ENCODE measurements at regions of chr10 and their contacts with region 1.

Region 1: GRCh38 chr10:5629303-5630111 is 36.9 kb downstream of the ASB13 start:
- DNase-seq: peak; percentile 93
- ATAC-seq: peak; percentile 74
- H3K4me3 Mint-ChIP-seq: peak overlapping the region; percentile 44
- H3K27ac Mint-ChIP-seq: peak overlapping the region; percentile 82
- H3K4me1 Mint-ChIP-seq: peaks cover 22% of the 10 kb centered on the region
- H3K27me3 Mint-ChIP-seq: peaks cover 7% of the 10 kb centered on the region

Region 2: GRCh38 chr10:4819707-4820106 is 809.8 kb before region 1 on chr10:
- CTCF ChIA-PET with region 1: interaction called, 4 read pairs
- POLR2A ChIA-PET with region 1: no interaction called
- intact Hi-C with region 1: loop called in 1 of 2 experiments (anchors 5 kb)
- DNase-seq: no peak
- ATAC-seq: no peak
- H3K4me3 Mint-ChIP-seq: no peak overlapping the region
- H3K27ac Mint-ChIP-seq: no peak overlapping the region
- H3K4me1 Mint-ChIP-seq: no peaks in the 10 kb centered on the region
- H3K27me3 Mint-ChIP-seq: peaks cover 6% of the 10 kb centered on the region

Region 3: GRCh38 chr10:5071411-5072198 is 557.9 kb before region 1 on chr10:
- CTCF ChIA-PET with region 1: no interaction called
- POLR2A ChIA-PET with region 1: no interaction called
- intact Hi-C with region 1: no loop called
- DNase-seq: no peak
- ATAC-seq: no peak
- H3K4me3 Mint-ChIP-seq: no peak overlapping the region
- H3K27ac Mint-ChIP-seq: no peak overlapping the region
- H3K4me1 Mint-ChIP-seq: no peaks in the 10 kb centered on the region
- H3K27me3 Mint-ChIP-seq: peaks cover 2% of the 10 kb centered on the region

Region 4: GRCh38 chr10:5446390-5446926 is 183.0 kb before region 1 on chr10:
- CTCF ChIA-PET with region 1: interaction called, 178 read pairs
- POLR2A ChIA-PET with region 1: interaction called, 3 read pairs
- intact Hi-C with region 1: no loop called
- DNase-seq: peak; percentile 86
- ATAC-seq: peak; percentile 71
- H3K4me3 Mint-ChIP-seq: peak overlapping the region; percentile 70
- H3K27ac Mint-ChIP-seq: peak overlapping the region; percentile 45
- H3K4me1 Mint-ChIP-seq: peaks cover 53% of the 10 kb centered on the region
- H3K27me3 Mint-ChIP-seq: no peaks in the 10 kb centered on the region

Region 5: GRCh38 chr10:5563991-5564536 is 65.4 kb before region 1 on chr10:
- CTCF ChIA-PET with region 1: no interaction called
- POLR2A ChIA-PET with region 1: no interaction called
- intact Hi-C with region 1: loop called in 1 of 2 experiments (anchors 2 kb)
- DNase-seq: peak; percentile 80
- ATAC-seq: peak; percentile 86
- H3K4me3 Mint-ChIP-seq: peak overlapping the region; percentile 51
- H3K27ac Mint-ChIP-seq: peak overlapping the region; percentile 86
- H3K4me1 Mint-ChIP-seq: peaks cover 49% of the 10 kb centered on the region
- H3K27me3 Mint-ChIP-seq: no peaks in the 10 kb centered on the region

Region 6: GRCh38 chr10:5643346-5644067 is 14.0 kb after region 1 on chr10:
- CTCF ChIA-PET with region 1: interaction called, 18 read pairs
- POLR2A ChIA-PET with region 1: no interaction called
- intact Hi-C with region 1: no loop called
- DNase-seq: no peak
- ATAC-seq: no peak
- H3K4me3 Mint-ChIP-seq: no peak overlapping the region
- H3K27ac Mint-ChIP-seq: no peak overlapping the region
- H3K4me1 Mint-ChIP-seq: no peaks in the 10 kb centered on the region
- H3K27me3 Mint-ChIP-seq: no peaks in the 10 kb centered on the region

Region 7: GRCh38 chr10:5752301-5752871 is 122.9 kb after region 1 on chr10:
- CTCF ChIA-PET with region 1: no interaction called
- POLR2A ChIA-PET with region 1: no interaction called
- intact Hi-C with region 1: loop called in 1 of 2 experiments (anchors 5 kb)
- DNase-seq: no peak
- ATAC-seq: peak; percentile 31
- H3K4me3 Mint-ChIP-seq: no peak overlapping the region
- H3K27ac Mint-ChIP-seq: no peak overlapping the region
- H3K4me1 Mint-ChIP-seq: peaks cover 29% of the 10 kb centered on the region
- H3K27me3 Mint-ChIP-seq: no peaks in the 10 kb centered on the region

Region 8: GRCh38 chr10:5873515-5873995 is 244.0 kb after region 1 on chr10:
- CTCF ChIA-PET with region 1: interaction called, 4 read pairs
- POLR2A ChIA-PET with region 1: no interaction called
- intact Hi-C with region 1: loop called (anchors 1 to 2 kb)
- DNase-seq: peak; percentile 77
- ATAC-seq: peak; percentile 95
- H3K4me3 Mint-ChIP-seq: no peak overlapping the region
- H3K27ac Mint-ChIP-seq: no peak overlapping the region
- H3K4me1 Mint-ChIP-seq: peaks cover 4% of the 10 kb centered on the region
- H3K27me3 Mint-ChIP-seq: no peaks in the 10 kb centered on the region